Activated CD4-positive, alpha-beta T cell treated with anti-CD3 and anti-CD28 coated beads, Interleukin-2, amount 10 ng/mL, durations not matched to agents 24 days and 14 days (primary cell): ENCODE measurements at regions of chr17 and their contacts with region 1.

Region 1: GRCh38 chr17:21284319-21285163 is at the start of gene MAP2K3:
- DNase-seq: peak; percentile 99
- H3K4me3 Mint-ChIP-seq: peak within 1 kb of the TSS; percentile 100
- H3K27ac Mint-ChIP-seq: peak within 1 kb of the TSS; percentile 94
- H3K4me1 Mint-ChIP-seq: peaks cover 43% of the 10 kb centered on the region
- H3K27me3 Mint-ChIP-seq: peaks cover 2% of the 10 kb centered on the region
- total RNA-seq, gene MAP2K3: 159 and 166 TPM in 2 replicates

Region 2: GRCh38 chr17:21126645-21127510 is 157.7 kb before region 1 on chr17 and contains the start of gene DHRS7B:
- intact Hi-C with region 1: loop called (anchors 1 kb)
- DNase-seq: peak; percentile 99
- H3K4me3 Mint-ChIP-seq: peak within 1 kb of the TSS; percentile 89
- H3K27ac Mint-ChIP-seq: peak within 1 kb of the TSS; percentile 94
- H3K4me1 Mint-ChIP-seq: peaks cover 26% of the 10 kb centered on the region
- H3K27me3 Mint-ChIP-seq: no peaks in the 10 kb centered on the region
- total RNA-seq, gene DHRS7B: 19.4 and 22.8 TPM in 2 replicates

Region 3: GRCh38 chr17:21252796-21253645 is 31.5 kb before region 1 on chr17 and contains the start of gene NATD1:
- intact Hi-C with region 1: loop called (anchors 1 kb)
- DNase-seq: peak; percentile 92
- H3K4me3 Mint-ChIP-seq: peak within 1 kb of the TSS; percentile 83
- H3K27ac Mint-ChIP-seq: peak within 1 kb of the TSS; percentile 65
- H3K4me1 Mint-ChIP-seq: peaks cover 11% of the 10 kb centered on the region
- H3K27me3 Mint-ChIP-seq: peaks cover 22% of the 10 kb centered on the region
- total RNA-seq, gene NATD1: 1.1 TPM in 2 replicates

Region 4: GRCh38 chr17:21304091-21304490 is 19.6 kb after region 1 on chr17:
- intact Hi-C with region 1: no loop called
- DNase-seq: no peak
- H3K4me3 Mint-ChIP-seq: no peak overlapping the region
- H3K27ac Mint-ChIP-seq: no peak overlapping the region
- H3K4me1 Mint-ChIP-seq: peaks cover 2% of the 10 kb centered on the region
- H3K27me3 Mint-ChIP-seq: no peaks in the 10 kb centered on the region

Region 5: GRCh38 chr17:21457051-21458026 is 172.8 kb after region 1 on chr17:
- intact Hi-C with region 1: loop called (anchors 2 kb)
- DNase-seq: peak; percentile 98
- H3K4me3 Mint-ChIP-seq: no peak overlapping the region
- H3K27ac Mint-ChIP-seq: no peak overlapping the region
- H3K4me1 Mint-ChIP-seq: peaks cover 13% of the 10 kb centered on the region
- H3K27me3 Mint-ChIP-seq: peaks cover 42% of the 10 kb centered on the region

Region 6: GRCh38 chr17:21756856-21757619 is 472.5 kb after region 1 on chr17:
- intact Hi-C with region 1: no loop called
- DNase-seq: no peak
- H3K4me3 Mint-ChIP-seq: no peak overlapping the region
- H3K27ac Mint-ChIP-seq: no peak overlapping the region
- H3K4me1 Mint-ChIP-seq: no peaks in the 10 kb centered on the region
- H3K27me3 Mint-ChIP-seq: no peaks in the 10 kb centered on the region